ENCODE measurements at regions of chr12 and their contacts with region 1.

Region 1: DNA sequence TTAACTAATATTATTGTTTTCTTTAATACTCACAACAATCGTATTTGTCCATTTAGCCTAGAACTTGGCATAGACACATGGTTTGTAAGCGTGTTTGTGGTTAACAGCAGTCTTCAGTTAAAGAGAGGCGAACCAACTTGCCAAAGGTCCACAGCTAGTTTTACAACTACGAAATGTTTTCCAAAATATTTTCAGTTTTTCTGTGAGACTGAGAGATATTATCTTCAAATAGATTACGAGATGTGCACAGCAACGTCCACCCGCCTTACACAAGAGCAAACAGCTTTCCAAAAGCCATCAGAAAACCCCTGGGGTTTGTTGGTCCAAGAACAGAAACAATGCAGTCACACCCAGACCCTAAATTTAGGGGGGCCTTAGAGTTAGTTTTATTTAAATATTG is 58.6 kb upstream of the RASSF3 start:
- DNase-seq: no peak
- ATAC-seq: no peak
- H3K4me3 ChIP-seq: no peak overlapping the region
- H3K27ac ChIP-seq: peak overlapping the region in 2 of 12 donors; percentile 18 to 23
- H3K4me1 ChIP-seq: peaks cover 0 to 14% (median 0%) of the 10 kb centered on the region in 12 donors
- H3K27me3 ChIP-seq: no peaks in the 10 kb centered on the region
- CTCF ChIP-seq: no peak
- POLR2A ChIP-seq: no peak

Region 2: DNA sequence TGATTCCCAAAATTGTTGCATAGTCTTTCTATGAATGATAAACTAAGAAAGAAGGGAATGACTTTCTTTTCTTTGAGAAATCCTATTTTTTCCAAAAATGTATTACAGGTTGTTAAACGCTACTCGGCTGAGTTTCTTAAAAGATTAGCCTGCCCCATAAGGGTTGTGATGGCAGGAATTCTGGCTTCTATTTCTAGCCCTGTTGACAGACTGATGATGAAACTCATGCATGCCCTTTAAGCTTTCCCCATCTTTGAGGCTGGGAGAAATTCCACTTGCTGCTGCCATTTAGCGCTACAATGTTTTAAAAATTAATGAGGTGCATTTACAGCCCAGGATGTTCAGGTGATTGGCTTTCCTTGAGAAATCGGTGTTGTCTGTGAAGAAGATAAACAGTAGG is 25.3 kb after region 1 on chr12:
- intact Hi-C with region 1: loop called in 1 of 10 experiments (anchors 2 kb)
- DNase-seq: no peak
- ATAC-seq: peak in 3 of 4 donors; percentile 49 to 81 (median 76)
- H3K4me3 ChIP-seq: no peak overlapping the region
- H3K27ac ChIP-seq: no peak overlapping the region
- H3K4me1 ChIP-seq: peaks cover 0 to 10% (median 0%) of the 10 kb centered on the region in 12 donors
- H3K27me3 ChIP-seq: no peaks in the 10 kb centered on the region
- CTCF ChIP-seq: no peak
- POLR2A ChIP-seq: no peak

Region 3: GRCh38 chr12:64696080-64696741 is 144.5 kb after region 1 on chr12:
- intact Hi-C with region 1: loop called (anchors 1 to 2 kb)
- DNase-seq: no peak
- ATAC-seq: peak in 2 of 4 donors; percentile 12 to 19
- H3K4me3 ChIP-seq: no peak overlapping the region
- H3K27ac ChIP-seq: peak overlapping the region in 6 of 12 donors; percentile 16 to 42 (median 32)
- H3K4me1 ChIP-seq: peaks cover 0 to 48% (median 13%) of the 10 kb centered on the region in 12 donors
- H3K27me3 ChIP-seq: no peaks in the 10 kb centered on the region
- CTCF ChIP-seq: peak in 10 of 12 donors; percentile 30 to 65 (median 53)
- POLR2A ChIP-seq: no peak

Measured in heart left ventricle (tissue), 16 donors.